Cardiac septum (tissue), 1 donor: ENCODE measurements at regions of chr5 and their contacts with region 1.

Region 1: DNA sequence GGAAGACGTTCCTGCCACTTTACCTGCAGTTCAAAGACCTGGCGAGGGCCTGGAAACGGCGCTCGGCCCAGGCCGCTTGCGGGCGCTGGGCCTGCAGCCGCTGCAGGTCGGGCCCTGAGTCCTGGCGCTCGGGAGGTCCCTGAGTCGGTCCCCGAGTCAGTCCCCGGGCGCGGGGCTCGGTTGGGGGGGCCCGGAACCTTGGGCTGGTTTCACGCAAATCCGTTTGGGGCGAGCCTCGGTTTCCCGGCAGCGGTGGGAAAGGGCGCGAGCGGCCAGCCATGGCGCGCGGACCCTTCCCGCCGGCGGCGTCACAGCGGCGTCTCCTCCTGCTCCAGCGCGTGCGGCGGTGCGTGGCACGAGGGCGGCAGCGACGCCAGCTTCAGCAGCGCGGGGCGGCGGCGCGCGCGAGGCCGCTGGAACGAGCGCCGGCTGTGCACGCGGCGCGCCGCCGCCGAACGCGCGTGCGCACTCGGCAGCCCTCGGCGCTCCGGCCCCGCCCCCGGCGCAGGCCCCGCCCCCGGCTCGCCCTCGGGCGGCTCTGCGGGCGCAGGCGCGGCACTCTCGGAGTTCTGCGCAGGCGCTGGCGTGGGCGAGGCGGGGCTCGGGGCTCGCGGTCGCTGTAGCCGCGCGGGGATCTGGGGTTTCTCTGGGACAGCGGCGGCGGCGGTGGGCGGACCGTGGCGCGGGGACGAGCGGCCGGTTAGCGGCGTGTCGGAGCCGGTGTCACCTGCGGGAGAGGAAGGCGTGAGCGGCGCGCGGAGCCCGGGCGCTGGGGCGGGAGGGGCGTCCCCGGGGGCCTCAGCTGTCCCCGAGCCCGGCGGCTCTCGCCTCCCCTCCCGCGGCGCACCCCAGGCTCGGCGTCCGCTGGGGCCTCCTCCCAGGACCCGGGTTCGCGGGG is 29.9 kb downstream of the EXOC3 start:
- DNase-seq: peak; percentile 94

Region 2: DNA sequence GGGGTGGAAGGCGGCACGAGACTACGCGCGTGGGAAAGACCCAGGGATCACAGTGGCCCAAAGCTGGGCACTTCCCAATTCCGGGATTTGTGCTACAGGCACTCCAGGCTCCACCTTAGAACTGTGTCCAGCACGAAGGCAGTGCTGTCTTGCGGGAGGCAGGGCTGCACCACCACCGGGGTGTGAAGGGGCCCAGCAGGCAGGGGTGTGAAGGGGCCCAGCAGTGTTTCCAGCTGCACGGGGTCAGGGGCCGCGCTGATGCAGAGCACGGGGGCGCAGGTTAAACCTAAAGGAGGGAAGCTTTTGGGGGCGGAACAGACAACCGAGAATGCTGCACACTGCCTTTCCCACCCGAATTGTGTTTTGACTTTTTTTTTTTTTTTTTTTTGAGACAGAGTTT is 202.6 kb before region 1 on chr5:
- intact Hi-C with region 1: loop called (anchors 1 kb)
- DNase-seq: no peak

Region 3: GRCh38 chr5:418681-419121 is 54.2 kb before region 1 on chr5:
- intact Hi-C with region 1: no loop called
- DNase-seq: peak; percentile 57

Region 4: DNA sequence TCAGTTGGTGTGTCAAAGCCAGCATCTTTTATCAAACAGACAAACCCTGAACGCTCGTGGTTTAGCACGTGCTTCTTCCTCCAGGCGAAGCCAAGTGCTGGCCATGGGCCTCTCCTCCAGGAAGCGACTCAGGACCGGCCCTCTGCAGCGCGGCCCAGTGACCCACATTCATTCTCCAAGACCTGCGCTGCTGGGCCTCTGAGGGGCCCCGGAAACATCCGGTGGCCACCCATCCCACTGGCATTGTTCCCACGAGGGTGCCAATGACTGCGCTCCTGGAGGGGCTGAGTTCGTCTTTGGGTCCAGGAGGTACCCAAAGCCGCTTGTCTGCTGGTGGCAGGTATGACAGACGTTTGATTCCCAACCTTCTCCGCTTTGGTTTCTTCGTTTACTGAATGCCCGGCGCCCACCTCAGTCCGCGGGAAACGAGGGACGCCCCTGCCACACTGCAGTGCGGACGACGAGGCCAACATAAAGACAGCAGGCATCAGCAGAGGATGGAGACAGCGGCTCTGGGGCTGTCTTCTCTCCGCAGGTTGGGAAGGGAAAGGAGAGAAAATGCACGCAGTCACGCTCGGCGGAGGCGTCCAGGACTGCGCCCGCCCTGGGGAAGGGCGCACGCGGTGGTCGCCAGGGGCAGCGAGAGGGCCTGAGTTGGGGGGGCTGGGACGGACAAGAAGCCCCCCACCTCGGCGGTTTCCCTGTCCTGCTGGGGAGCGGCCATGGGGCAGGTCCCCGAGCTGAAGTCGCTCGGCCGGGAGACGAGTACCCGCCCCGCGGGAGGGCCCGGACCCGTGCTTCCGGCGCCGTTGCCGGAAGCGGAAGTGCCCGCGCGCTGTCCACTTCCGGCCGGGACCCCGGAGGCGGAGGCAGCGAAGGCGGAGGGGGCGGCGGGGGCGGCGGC is 30.3 kb before region 1 on chr5 and contains the start of gene EXOC3:
- intact Hi-C with region 1: loop called (anchors 2 kb)
- DNase-seq: peak; percentile 86
- total RNA-seq, gene EXOC3: 42.9 TPM

Region 5: DNA sequence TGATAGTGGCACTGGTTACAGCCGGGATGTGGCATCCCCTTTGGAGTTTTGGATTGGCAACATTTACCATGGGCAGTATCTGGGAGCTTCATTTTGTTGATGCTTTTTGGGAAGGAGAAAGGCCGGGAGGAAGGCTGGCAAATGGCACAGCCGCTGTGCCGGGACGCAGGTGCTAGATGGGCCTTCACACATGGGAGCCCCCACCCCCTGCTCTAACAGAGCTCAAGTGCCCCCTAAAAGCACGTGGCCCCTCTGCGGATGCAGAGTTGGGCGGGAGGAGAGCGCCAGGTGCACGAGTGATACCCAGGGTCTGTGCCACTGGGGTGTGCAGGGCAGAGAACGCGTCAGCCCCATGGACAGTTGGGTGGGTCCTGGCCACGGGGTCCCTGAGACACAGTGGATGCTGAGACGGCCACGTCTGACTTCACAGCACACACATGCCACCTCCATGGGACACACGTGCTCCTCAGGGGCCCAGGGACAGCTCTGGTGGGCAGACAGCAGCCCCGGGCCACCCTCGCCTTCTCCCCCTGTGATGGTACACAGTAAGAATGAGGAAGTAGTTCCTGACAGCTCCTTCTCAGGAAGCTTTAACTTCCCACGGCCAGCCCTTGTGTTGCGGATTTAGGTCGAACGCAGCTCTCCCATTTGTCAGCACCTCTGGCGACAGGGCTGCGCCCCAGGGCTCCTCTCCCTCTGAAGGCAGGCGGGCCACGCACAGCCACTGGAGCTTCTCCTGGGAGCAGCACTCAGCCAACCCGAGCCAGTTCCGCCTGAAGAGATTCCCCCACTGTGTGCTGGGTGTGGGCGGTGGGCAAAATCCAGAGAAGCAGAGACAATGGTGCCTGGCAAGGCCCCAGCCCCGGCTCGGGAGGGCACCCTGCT is 40.6 kb after region 1 on chr5:
- intact Hi-C with region 1: no loop called
- DNase-seq: no peak

Region 6: GRCh38 chr5:611721-612486 is 139.0 kb after region 1 on chr5 and contains the start of gene CEP72:
- intact Hi-C with region 1: loop called (anchors 5 kb)
- DNase-seq: peak; percentile 97
- total RNA-seq, gene CEP72: 0.86 TPM

Region 7: DNA sequence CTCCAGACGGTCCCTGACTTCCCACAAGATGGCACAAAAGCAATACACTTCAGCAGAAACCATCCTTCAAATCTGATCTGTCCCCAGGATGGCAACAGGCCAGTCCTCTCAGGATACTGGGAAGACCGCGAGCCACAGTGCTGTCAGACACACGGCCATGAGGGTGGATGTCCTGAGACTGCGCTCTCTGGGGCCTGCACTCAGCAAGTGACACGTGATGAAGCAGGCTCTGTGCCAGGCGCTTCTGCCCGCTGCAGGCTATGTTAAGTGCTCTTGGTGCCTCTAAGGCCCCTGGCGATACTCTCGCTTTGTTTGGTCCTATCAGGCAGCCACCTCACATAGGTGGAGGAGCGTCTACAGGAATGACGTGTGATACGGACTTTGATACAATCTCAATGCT is 412.6 kb after region 1 on chr5:
- intact Hi-C with region 1: loop called (anchors 10 kb)
- DNase-seq: peak; percentile 85